ENCODE measurements at regions of chr1 and their contacts with region 1.

Region 1: GRCh38 chr1:7646981-7647901 is 123.9 kb upstream of the VAMP3 start:
- DNase-seq: peak; percentile 86
- ATAC-seq: peak; percentile 33

Region 2: DNA sequence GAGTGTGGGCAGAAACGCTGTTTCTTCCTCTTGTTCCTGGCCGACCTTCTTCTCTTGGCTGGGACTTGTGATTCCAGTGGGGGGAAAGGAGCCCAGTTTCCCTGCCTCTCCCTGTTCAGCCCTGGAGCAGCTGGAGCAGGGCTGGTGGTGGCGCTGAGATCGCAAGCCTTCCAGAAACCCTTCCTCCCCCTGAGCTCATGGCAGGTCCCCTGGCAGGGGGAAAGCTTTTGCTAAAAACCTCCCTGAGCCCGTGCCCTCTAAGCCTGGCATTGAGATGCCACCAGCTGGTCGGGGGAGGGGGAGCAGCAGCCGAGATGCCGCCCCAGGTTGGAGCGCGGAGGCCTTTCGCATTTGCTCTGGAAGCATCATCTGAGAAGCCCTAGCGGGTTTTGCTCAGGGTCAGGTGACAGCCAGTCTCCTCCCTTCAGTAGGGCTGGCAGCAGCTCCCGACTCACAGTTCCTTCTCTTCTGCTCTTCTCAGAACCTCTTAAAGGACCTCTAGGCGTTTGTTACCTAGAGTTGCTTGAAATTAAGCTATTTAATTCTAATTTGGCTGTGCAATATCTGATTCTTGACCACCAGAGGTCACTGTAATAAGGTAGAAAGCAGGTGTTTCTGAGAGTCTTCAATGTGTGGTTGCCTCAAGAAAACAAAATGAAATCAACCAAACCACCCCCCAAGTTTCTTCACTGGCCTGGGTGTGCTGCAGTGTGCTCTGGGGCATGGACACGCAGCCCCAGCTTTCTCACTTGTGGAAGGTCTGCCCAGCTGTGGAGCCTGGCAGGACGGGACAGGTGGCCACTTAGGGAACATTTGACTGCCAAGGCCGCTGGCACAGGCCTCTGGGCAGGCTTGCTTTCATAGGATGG is 604.7 kb before region 1 on chr1:
- intact Hi-C with region 1: loop called (anchors 2 kb)
- DNase-seq: no peak
- ATAC-seq: no peak

Region 3: GRCh38 chr1:7224644-7225043 is 422.6 kb before region 1 on chr1:
- intact Hi-C with region 1: loop called (anchors 5 kb)
- DNase-seq: no peak
- ATAC-seq: no peak

Region 4: GRCh38 chr1:7379445-7379971 is 267.7 kb before region 1 on chr1:
- intact Hi-C with region 1: loop called (anchors 10 kb)
- DNase-seq: no peak
- ATAC-seq: no peak

Region 5: GRCh38 chr1:7454052-7454815 is 193.0 kb before region 1 on chr1:
- intact Hi-C with region 1: loop called (anchors 2 kb)
- DNase-seq: no peak
- ATAC-seq: peak; percentile 30

Region 6: GRCh38 chr1:7516341-7516740 is 130.9 kb before region 1 on chr1:
- intact Hi-C with region 1: loop called (anchors 5 kb)
- DNase-seq: no peak
- ATAC-seq: peak; percentile 55

Region 7: GRCh38 chr1:7580923-7581753 is 66.1 kb before region 1 on chr1:
- intact Hi-C with region 1: loop called (anchors 5 kb)
- DNase-seq: peak; percentile 22
- ATAC-seq: no peak

Measured in Right ventricle myocardium inferior (tissue), 1 donor.